ENCODE measurements at regions of chr13 and their contacts with region 1.

Region 1: DNA sequence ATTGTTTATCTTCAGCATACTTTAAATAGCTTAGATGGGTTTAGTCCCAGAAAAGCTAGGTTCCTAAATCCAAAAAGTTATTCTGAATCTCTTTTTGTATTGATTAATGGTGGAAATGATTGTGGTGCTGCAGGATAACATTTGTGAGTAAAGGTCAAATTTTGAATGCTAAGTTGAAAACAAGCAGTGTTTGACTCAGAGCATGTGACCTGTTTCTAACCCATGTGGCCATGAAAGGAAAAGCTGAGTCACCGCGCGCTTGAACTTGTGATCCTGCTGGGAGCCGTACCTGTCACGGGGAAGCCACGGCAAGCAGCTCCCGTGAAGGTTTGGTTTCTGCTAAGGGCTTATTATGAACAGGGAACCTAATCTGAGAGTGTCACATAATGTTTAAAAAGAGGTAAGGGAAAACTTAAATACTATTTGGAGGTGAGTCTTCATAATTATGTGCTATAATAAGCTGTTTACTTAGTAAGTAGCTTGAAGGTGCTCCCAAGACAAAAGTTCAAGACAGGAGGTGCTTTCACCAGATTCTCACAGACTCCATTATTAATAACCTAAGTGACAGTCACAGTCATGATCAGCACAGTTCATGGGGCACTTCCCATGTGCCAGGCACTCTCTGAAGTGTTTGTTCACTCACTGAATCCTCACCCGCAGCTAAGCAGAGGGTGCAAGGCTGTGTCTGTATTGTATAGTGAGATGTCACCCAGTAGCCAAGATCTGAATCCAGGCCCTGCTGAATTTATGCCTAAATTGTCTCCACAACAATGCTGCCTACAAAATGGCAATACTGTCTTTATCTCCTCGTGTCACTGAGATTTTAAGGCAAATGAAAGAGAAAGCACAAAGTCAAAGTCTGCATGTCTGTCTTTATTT is 286.5 kb downstream of the MYO16 start:
- DNase-seq: peak in 3 of 5 donors; percentile 7 to 79 (median 20)
- H3K4me3 ChIP-seq: no peak overlapping the region
- H3K4me3 Mint-ChIP-seq: peak overlapping the region in 5 of 7 donors; percentile 28 to 66 (median 48)
- H3K27ac ChIP-seq: peak overlapping the region; percentile 5
- H3K27ac Mint-ChIP-seq: peak overlapping the region in 2 of 8 donors; percentile 16 to 51
- H3K4me1 ChIP-seq: peaks cover 9% of the 10 kb centered on the region
- H3K4me1 Mint-ChIP-seq: peaks cover 11 to 17% (median 16%) of the 10 kb centered on the region in 3 donors
- H3K27me3 ChIP-seq: no peaks in the 10 kb centered on the region
- H3K27me3 Mint-ChIP-seq: peaks cover 0 to 2% of the 10 kb centered on the region in 2 donors

Region 2: GRCh38 chr13:108549934-108550333 is 365.9 kb before region 1 on chr13:
- CTCF ChIA-PET with region 1: no interaction called
- POLR2A ChIA-PET with region 1: interaction called, 15 read pairs
- DNase-seq: no peak
- H3K4me3 ChIP-seq: no peak overlapping the region
- H3K4me3 Mint-ChIP-seq: no peak overlapping the region
- H3K27ac ChIP-seq: no peak overlapping the region
- H3K27ac Mint-ChIP-seq: no peak overlapping the region
- H3K4me1 ChIP-seq: no peaks in the 10 kb centered on the region
- H3K4me1 Mint-ChIP-seq: no peaks in the 10 kb centered on the region
- H3K27me3 ChIP-seq: no peaks in the 10 kb centered on the region
- H3K27me3 Mint-ChIP-seq: peaks cover 0 to 3% of the 10 kb centered on the region in 2 donors

Region 3: DNA sequence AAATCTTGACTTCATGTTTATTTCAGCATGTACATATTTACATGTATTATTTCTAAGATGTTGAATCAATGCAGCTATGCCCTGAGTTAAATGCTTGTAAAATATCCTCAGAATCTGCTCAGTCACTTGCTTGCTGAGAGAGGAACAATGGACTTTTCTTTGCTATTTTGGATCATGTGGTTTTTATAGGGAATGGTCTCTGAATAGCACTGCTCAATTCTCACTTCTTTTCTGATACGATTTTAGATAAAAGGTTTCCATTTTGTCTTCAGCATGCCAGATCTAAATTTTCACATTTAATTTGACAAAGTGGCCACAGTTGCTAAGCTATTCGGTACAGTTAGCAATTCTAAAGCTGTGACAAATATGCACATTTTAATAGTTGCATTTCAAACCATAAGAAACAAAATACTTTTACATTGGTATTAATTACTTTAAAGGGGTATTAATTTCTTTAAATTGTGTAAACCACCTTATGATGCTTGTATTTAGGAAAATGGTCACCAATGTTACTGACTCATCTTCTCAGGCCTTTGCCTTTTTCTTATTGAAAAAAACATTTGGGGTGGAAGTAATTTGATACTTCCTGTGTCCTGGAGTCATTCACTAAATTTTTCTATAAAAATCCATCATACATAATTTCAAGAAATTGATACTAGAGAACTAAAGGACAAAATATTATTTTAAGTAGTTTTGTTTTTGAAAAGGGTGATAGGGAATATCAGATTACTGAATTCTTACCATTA is 173.0 kb before region 1 on chr13:
- CTCF ChIA-PET with region 1: no interaction called
- POLR2A ChIA-PET with region 1: no interaction called
- DNase-seq: no peak
- H3K4me3 ChIP-seq: no peak overlapping the region
- H3K4me3 Mint-ChIP-seq: no peak overlapping the region
- H3K27ac ChIP-seq: no peak overlapping the region
- H3K27ac Mint-ChIP-seq: no peak overlapping the region
- H3K4me1 ChIP-seq: no peaks in the 10 kb centered on the region
- H3K4me1 Mint-ChIP-seq: no peaks in the 10 kb centered on the region
- H3K27me3 ChIP-seq: no peaks in the 10 kb centered on the region
- H3K27me3 Mint-ChIP-seq: peaks cover 2 to 3% of the 10 kb centered on the region in 2 donors

Region 4: DNA sequence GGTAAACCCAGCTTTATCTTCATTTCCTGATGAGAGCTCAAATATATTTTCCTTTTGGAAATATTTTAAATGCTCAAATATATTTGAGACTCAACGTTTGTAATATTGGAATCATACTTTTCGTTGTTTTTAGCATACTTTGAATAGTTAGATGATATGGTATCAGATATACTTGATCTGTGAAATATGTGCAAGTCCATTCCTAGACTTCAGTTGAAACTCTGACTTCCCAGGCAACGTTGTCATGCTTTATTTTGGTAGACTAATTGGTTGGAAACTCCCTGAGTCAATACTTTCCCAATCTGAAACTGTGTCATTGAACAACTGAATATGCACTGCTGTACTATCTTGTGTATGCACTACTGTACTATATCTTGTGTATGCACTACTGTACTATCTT is 92.1 kb after region 1 on chr13:
- CTCF ChIA-PET with region 1: no interaction called
- POLR2A ChIA-PET with region 1: no interaction called
- DNase-seq: no peak
- H3K4me3 ChIP-seq: no peak overlapping the region
- H3K4me3 Mint-ChIP-seq: no peak overlapping the region
- H3K27ac ChIP-seq: no peak overlapping the region
- H3K27ac Mint-ChIP-seq: no peak overlapping the region
- H3K4me1 ChIP-seq: no peaks in the 10 kb centered on the region
- H3K4me1 Mint-ChIP-seq: no peaks in the 10 kb centered on the region
- H3K27me3 ChIP-seq: no peaks in the 10 kb centered on the region
- H3K27me3 Mint-ChIP-seq: no peaks in the 10 kb centered on the region

Measured in CD8-positive, alpha-beta memory T cell (primary cell).